B cell (primary cell): ENCODE measurements at regions of chr5 and their contacts with region 1.

Region 1: GRCh38 chr5:163915481-163915961 is 410.1 kb downstream of the MAT2B start:
- DNase-seq: peak; percentile 90
- ATAC-seq: peak; percentile 60
- H3K4me3 ChIP-seq: peak overlapping the region; percentile 25 to 69 (median 38)
- H3K4me3 Mint-ChIP-seq: peak overlapping the region; percentile 93
- H3K27ac ChIP-seq: peak overlapping the region; percentile 96 to 97
- H3K27ac Mint-ChIP-seq: peak overlapping the region; percentile 100
- H3K4me1 ChIP-seq: peaks cover 46 to 53% of the 10 kb centered on the region in 2 donors
- H3K4me1 Mint-ChIP-seq: peaks cover 71% of the 10 kb centered on the region
- H3K27me3 ChIP-seq: no peaks in the 10 kb centered on the region
- H3K27me3 Mint-ChIP-seq: no peaks in the 10 kb centered on the region
- CTCF ChIP-seq: no peak

Region 2: GRCh38 chr5:163437309-163438182 is 478.0 kb before region 1 on chr5 and contains the start of gene CCNG1:
- CTCF ChIA-PET with region 1: no interaction called
- POLR2A ChIA-PET with region 1: no interaction called
- intact Hi-C with region 1: loop called (anchors 10 kb)
- DNase-seq: peak; percentile 94
- ATAC-seq: peak; percentile 97
- H3K4me3 ChIP-seq: peak within 1 kb of the TSS; percentile 55 to 95 (median 83)
- H3K4me3 Mint-ChIP-seq: peak within 1 kb of the TSS; percentile 87
- H3K27ac ChIP-seq: peak within 1 kb of the TSS; percentile 54 to 90
- H3K27ac Mint-ChIP-seq: peak within 1 kb of the TSS; percentile 93
- H3K4me1 ChIP-seq: peaks cover 15 to 23% of the 10 kb centered on the region in 2 donors
- H3K4me1 Mint-ChIP-seq: peaks cover 35% of the 10 kb centered on the region
- H3K27me3 ChIP-seq: no peaks in the 10 kb centered on the region
- H3K27me3 Mint-ChIP-seq: no peaks in the 10 kb centered on the region
- CTCF ChIP-seq: no peak
- total RNA-seq, gene CCNG1: 80.1 and 95.1 TPM in 2 replicates

Region 3: GRCh38 chr5:163505368-163506094 is 410.0 kb before region 1 on chr5 and contains the start of gene MAT2B:
- CTCF ChIA-PET with region 1: no interaction called
- POLR2A ChIA-PET with region 1: interaction called, 3 read pairs
- intact Hi-C with region 1: loop called (anchors 1 kb)
- DNase-seq: peak; percentile 97
- ATAC-seq: peak; percentile 88
- H3K4me3 ChIP-seq: peak within 1 kb of the TSS; percentile 61 to 99 (median 83)
- H3K4me3 Mint-ChIP-seq: peak within 1 kb of the TSS; percentile 98
- H3K27ac ChIP-seq: peak within 1 kb of the TSS; percentile 93 to 95
- H3K27ac Mint-ChIP-seq: peak within 1 kb of the TSS; percentile 98
- H3K4me1 ChIP-seq: peaks cover 47 to 60% of the 10 kb centered on the region in 2 donors
- H3K4me1 Mint-ChIP-seq: peaks cover 61% of the 10 kb centered on the region
- H3K27me3 ChIP-seq: no peaks in the 10 kb centered on the region
- H3K27me3 Mint-ChIP-seq: no peaks in the 10 kb centered on the region
- CTCF ChIP-seq: peak; percentile 76
- total RNA-seq, gene MAT2B: 117 and 123 TPM in 2 replicates

Region 4: DNA sequence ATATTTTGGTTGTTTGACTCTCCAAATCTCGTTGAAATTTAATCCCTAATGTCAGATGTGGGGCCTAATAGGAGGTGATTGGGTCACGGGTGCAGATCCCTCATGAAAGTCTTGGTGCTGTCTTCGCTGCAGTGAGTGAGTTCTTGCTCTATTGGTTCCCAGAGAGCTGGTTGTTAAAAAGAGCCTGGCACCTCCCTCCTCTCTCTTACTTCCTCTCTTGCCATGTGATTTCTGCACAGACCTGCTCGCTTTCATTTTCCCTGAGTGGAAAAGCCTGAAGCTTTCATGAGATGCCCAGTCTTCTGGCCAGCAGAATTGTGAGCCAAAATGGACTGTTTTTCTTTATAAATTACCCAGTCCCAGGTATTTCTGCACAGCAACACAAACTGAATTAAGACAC is 188.5 kb before region 1 on chr5:
- CTCF ChIA-PET with region 1: no interaction called
- POLR2A ChIA-PET with region 1: no interaction called
- intact Hi-C with region 1: loop called (anchors 1 kb)
- DNase-seq: peak; percentile 68
- ATAC-seq: peak; percentile 97
- H3K4me3 ChIP-seq: peak overlapping the region in 4 of 5 experiments; percentile 12 to 58 (median 40)
- H3K4me3 Mint-ChIP-seq: peak overlapping the region; percentile 49
- H3K27ac ChIP-seq: peak overlapping the region; percentile 37 to 48
- H3K27ac Mint-ChIP-seq: peak overlapping the region; percentile 80
- H3K4me1 ChIP-seq: peaks cover 8 to 16% of the 10 kb centered on the region in 2 donors
- H3K4me1 Mint-ChIP-seq: peaks cover 34% of the 10 kb centered on the region
- H3K27me3 ChIP-seq: no peaks in the 10 kb centered on the region
- H3K27me3 Mint-ChIP-seq: no peaks in the 10 kb centered on the region
- CTCF ChIP-seq: no peak

Region 5: DNA sequence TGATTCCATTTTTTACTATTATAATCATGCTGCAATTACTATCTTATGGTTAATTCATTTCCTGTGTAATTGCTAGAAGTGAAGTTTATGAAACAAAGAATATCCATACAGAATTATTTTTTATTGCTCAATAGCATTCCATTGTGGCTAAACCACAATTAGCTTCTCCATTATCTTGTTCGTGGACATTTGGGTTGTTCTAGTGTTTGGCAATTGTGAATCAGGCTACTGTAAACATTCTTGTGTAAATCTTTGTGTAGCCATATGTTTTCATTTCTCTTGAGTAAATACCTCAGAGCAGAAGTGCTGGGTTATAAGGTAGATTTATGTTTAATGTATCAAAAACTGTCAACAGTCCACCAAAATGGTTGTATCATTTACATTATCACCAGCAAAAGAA is 69.0 kb before region 1 on chr5:
- CTCF ChIA-PET with region 1: no interaction called
- POLR2A ChIA-PET with region 1: no interaction called
- intact Hi-C with region 1: loop called (anchors 2 kb)
- DNase-seq: no peak
- ATAC-seq: no peak
- H3K4me3 ChIP-seq: no peak overlapping the region
- H3K4me3 Mint-ChIP-seq: no peak overlapping the region
- H3K27ac ChIP-seq: no peak overlapping the region
- H3K27ac Mint-ChIP-seq: no peak overlapping the region
- H3K4me1 ChIP-seq: no peaks in the 10 kb centered on the region
- H3K4me1 Mint-ChIP-seq: peaks cover 1% of the 10 kb centered on the region
- H3K27me3 ChIP-seq: no peaks in the 10 kb centered on the region
- H3K27me3 Mint-ChIP-seq: no peaks in the 10 kb centered on the region
- CTCF ChIP-seq: no peak

Region 6: DNA sequence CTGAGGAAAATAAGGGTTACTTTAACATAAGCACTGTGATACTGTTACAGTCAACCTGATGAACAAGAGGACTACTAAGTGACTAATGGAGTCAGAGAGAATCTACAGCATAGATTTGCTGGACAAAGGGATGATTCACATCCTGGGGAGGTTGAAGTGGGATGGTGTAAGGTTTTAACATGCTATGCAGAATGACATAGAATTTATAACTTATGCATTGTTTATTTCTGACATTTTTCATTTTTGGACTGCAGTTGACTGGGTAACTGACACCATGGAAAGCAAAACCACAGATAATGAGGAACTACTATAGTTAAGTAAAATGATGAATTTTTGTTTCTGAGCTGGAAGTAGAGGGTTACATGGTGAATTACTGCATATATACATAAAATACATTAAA is 20.9 kb before region 1 on chr5:
- CTCF ChIA-PET with region 1: interaction called, 4 read pairs
- POLR2A ChIA-PET with region 1: no interaction called
- intact Hi-C with region 1: loop called (anchors 2 kb)
- DNase-seq: no peak
- ATAC-seq: peak; percentile 36
- H3K4me3 ChIP-seq: no peak overlapping the region
- H3K4me3 Mint-ChIP-seq: peak overlapping the region; percentile 42
- H3K27ac ChIP-seq: no peak overlapping the region
- H3K27ac Mint-ChIP-seq: peak overlapping the region; percentile 21
- H3K4me1 ChIP-seq: peaks cover 10 to 20% of the 10 kb centered on the region in 2 donors
- H3K4me1 Mint-ChIP-seq: peaks cover 35% of the 10 kb centered on the region
- H3K27me3 ChIP-seq: no peaks in the 10 kb centered on the region
- H3K27me3 Mint-ChIP-seq: no peaks in the 10 kb centered on the region
- CTCF ChIP-seq: no peak

Region 7: DNA sequence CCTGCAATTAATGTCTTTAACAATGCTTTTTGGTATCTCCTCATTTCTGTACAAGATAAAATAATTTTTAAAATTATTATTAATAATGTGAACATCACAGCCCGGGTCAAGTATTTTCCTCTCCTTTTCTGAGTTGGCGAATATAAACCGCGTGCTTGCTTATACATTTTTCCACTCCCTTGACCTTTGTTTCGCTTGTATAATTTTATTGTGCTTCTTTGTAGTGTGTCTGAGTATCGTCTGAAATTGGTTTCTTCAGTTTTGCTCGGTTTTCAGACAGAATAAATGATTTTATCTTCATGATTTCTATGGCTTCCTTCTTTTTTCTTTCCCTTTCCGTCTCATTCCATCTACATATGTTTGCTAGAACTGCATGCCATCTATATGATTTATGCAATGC is 38.4 kb after region 1 on chr5:
- CTCF ChIA-PET with region 1: no interaction called
- POLR2A ChIA-PET with region 1: no interaction called
- intact Hi-C with region 1: no loop called
- DNase-seq: no peak
- ATAC-seq: no peak
- H3K4me3 ChIP-seq: no peak overlapping the region
- H3K4me3 Mint-ChIP-seq: no peak overlapping the region
- H3K27ac ChIP-seq: no peak overlapping the region
- H3K27ac Mint-ChIP-seq: no peak overlapping the region
- H3K4me1 ChIP-seq: no peaks in the 10 kb centered on the region
- H3K4me1 Mint-ChIP-seq: peaks cover 5% of the 10 kb centered on the region
- H3K27me3 ChIP-seq: no peaks in the 10 kb centered on the region
- H3K27me3 Mint-ChIP-seq: no peaks in the 10 kb centered on the region
- CTCF ChIP-seq: no peak

Region 8: DNA sequence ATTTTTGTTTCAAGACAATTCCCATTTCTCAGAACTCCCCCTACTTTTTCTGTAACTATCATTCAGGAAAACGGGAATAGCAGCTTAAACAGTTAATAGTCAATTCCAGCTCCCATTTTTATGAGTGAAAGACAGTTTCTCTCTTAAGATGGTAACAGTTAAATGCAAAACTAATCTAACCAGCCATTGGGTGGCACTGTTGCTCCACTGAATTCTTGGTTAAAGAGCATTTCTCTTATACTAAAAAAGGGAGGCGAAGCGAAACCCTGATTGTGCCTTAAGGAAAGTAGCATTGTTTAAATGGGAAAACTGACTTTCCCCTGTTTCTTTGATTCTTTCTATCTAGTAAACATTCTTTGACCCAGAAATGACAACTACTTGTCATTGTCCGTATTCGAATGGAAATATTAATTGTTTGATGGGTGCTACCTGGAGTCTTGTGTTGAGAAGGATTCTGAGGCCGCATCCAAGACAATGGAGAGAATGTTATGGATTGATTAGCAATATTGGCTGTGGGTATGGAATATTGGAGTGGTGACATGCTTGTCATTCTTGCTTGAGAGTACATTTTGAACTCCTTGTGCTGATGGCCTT is 97.7 kb after region 1 on chr5:
- CTCF ChIA-PET with region 1: interaction called, 37 read pairs
- POLR2A ChIA-PET with region 1: interaction called, 3 read pairs
- intact Hi-C with region 1: loop called (anchors 1 kb)
- DNase-seq: peak; percentile 79
- ATAC-seq: peak; percentile 65
- H3K4me3 ChIP-seq: no peak overlapping the region
- H3K4me3 Mint-ChIP-seq: peak overlapping the region; percentile 48
- H3K27ac ChIP-seq: no peak overlapping the region
- H3K27ac Mint-ChIP-seq: peak overlapping the region; percentile 43
- H3K4me1 ChIP-seq: peaks cover 4 to 8% of the 10 kb centered on the region in 2 donors
- H3K4me1 Mint-ChIP-seq: peaks cover 11% of the 10 kb centered on the region
- H3K27me3 ChIP-seq: no peaks in the 10 kb centered on the region
- H3K27me3 Mint-ChIP-seq: no peaks in the 10 kb centered on the region
- CTCF ChIP-seq: peak; percentile 88

Region 9: DNA sequence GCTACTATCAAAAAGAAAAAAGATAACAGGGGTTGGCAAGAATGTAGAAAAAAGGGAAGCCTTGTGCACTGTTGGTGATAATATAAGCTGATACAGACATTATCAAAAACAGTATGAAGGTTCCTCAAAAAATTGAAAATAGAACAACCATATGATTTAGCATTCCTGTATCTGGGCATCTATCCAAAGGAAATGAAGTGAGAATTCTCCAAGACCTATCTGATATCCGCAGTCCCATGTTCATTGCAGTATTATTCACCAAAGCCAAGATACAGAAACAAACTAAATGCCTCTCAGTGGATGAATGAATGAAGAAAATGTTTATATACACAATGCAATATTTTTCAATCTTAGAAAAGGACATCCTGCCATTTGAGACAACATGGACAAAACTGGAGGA is 1533.2 kb after region 1 on chr5:
- CTCF ChIA-PET with region 1: no interaction called
- POLR2A ChIA-PET with region 1: no interaction called
- intact Hi-C with region 1: no loop called
- DNase-seq: no peak
- ATAC-seq: no peak
- H3K4me3 ChIP-seq: no peak overlapping the region
- H3K4me3 Mint-ChIP-seq: no peak overlapping the region
- H3K27ac ChIP-seq: no peak overlapping the region
- H3K27ac Mint-ChIP-seq: no peak overlapping the region
- H3K4me1 ChIP-seq: no peaks in the 10 kb centered on the region
- H3K4me1 Mint-ChIP-seq: no peaks in the 10 kb centered on the region
- H3K27me3 ChIP-seq: no peaks in the 10 kb centered on the region
- H3K27me3 Mint-ChIP-seq: no peaks in the 10 kb centered on the region
- CTCF ChIP-seq: no peak